ENCODE measurements at regions of chr5 and their contacts with region 1.

Region 1: DNA sequence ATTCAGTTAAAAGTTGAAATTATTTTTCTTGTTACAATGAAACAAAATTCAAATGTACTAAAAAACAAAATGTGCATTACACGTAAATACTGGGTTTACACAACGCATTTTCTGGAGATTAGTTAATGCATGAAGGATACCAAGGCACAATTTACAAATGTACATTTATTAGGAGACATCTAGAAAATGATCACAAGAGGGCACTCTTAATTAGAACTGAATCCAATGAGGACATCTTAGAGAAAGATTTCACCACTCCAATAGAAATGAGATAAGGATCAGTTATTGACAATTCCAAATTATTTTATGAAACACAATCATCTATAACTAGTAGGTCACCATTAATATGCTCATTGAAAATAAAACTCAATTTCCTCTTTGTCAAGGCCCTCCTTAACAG is 36.6 kb upstream of the CDH12 start:
- DNase-seq: no peak
- ATAC-seq: no peak
- H3K4me3 ChIP-seq: no peak overlapping the region
- H3K27ac ChIP-seq: no peak overlapping the region
- H3K4me1 ChIP-seq: no peaks in the 10 kb centered on the region
- H3K27me3 ChIP-seq: no peaks in the 10 kb centered on the region
- CTCF ChIP-seq: peak in 7 of 12 donors; percentile 11 to 38 (median 29)
- POLR2A ChIP-seq: no peak

Region 2: GRCh38 chr5:22998362-22998761 is 108.6 kb after region 1 on chr5:
- intact Hi-C with region 1: no loop called
- DNase-seq: no peak
- ATAC-seq: no peak
- H3K4me3 ChIP-seq: no peak overlapping the region
- H3K27ac ChIP-seq: no peak overlapping the region
- H3K4me1 ChIP-seq: no peaks in the 10 kb centered on the region
- H3K27me3 ChIP-seq: no peaks in the 10 kb centered on the region
- CTCF ChIP-seq: no peak
- POLR2A ChIP-seq: no peak

Region 3: GRCh38 chr5:23139338-23140171 is 249.8 kb after region 1 on chr5:
- intact Hi-C with region 1: loop called (anchors 1 to 10 kb)
- DNase-seq: no peak
- ATAC-seq: peak in 2 of 4 donors; percentile 44 to 50
- H3K4me3 ChIP-seq: no peak overlapping the region
- H3K27ac ChIP-seq: no peak overlapping the region
- H3K4me1 ChIP-seq: peaks cover 0 to 5% (median 0%) of the 10 kb centered on the region in 12 donors
- H3K27me3 ChIP-seq: no peaks in the 10 kb centered on the region
- CTCF ChIP-seq: peak; percentile 18 to 57 (median 43)
- POLR2A ChIP-seq: no peak